ENCODE measurements at regions of chr2 and their contacts with region 1.

Region 1: DNA sequence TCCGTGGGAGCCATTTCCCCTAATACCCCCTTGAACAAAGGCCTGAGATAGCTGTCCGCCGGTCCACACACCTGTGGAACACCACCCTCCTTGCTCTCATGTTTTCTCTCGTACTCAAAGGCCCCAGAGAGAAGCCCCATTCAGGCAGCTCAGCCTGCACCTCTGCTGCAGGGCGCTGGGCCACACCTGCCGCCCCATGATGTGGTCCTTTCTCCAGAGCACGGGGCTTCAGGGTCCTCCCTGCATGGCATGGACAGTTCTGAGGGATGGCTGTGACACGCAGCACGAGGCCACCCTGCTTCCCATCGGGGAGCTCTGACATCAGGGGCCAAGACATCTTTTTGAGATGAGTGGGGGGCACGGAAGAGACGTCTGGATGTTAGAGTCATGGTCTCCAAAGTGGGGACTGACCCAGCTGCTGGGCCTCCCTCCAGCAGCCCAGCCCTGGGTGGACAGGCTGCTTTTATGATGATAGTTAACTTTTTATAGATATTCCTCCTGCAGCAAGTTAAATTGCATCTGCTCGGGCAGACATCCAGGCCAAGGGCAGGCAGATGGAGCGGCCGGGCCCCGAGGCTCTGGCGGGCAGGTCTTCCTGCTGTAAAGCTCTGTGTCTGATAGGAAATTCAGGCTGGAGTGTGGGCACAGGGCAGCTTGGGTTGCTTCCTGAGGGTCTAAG is 56.7 kb downstream of the SDC1 start:
- H3K4me3 ChIP-seq: no peak overlapping the region
- H3K27ac ChIP-seq: no peak overlapping the region
- H3K4me1 ChIP-seq: no peaks in the 10 kb centered on the region
- CTCF ChIP-seq: no peak

Region 2: GRCh38 chr2:19632403-19632991 is 535.7 kb before region 1 on chr2:
- CTCF ChIA-PET with region 1: no interaction called
- POLR2A ChIA-PET with region 1: interaction called, 12 read pairs
- H3K4me3 ChIP-seq: no peak overlapping the region
- H3K27ac ChIP-seq: no peak overlapping the region
- H3K4me1 ChIP-seq: no peaks in the 10 kb centered on the region
- CTCF ChIP-seq: no peak

Region 3: DNA sequence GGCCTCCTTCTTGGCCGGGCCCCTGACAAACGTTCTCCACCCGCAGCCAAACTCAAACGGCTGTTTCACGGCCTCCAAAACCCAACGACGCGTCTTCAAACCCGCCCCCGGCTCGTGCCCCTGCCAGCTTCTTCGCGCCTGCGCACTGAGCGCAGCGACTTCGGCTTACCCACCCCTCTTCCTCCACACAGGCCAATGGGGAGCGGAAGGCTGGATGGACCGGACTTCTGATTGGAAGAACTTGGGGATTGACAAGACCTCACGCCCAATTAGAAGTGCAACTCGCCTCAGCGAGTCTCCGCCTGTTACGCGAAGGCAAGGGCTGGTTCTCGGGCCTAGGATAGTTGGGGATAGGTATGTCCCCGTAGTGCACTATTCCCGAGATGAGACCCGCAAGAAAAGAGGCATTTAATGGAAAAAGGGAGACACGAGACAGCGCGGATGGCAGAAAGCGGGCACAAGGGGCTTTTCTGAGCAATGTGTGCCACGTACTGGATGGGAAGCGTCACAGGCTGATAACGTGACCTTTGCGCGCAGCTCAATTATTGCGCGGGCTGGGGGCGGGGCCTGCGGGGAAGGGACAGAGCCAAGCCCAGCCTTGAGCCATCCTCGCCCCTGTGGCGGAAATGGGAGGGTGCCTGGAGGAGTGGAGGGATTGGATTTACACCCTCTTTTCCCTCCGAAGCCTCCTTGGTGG is 116.5 kb before region 1 on chr2 and contains the start of gene LAPTM4A:
- CTCF ChIA-PET with region 1: no interaction called
- POLR2A ChIA-PET with region 1: no interaction called
- H3K4me3 ChIP-seq: peak within 1 kb of the TSS; percentile 81
- H3K27ac ChIP-seq: peak within 1 kb of the TSS; percentile 83
- H3K4me1 ChIP-seq: peaks cover 7% of the 10 kb centered on the region
- CTCF ChIP-seq: 0 out of 2 replicates have a peak, but pooled peaks have one; percentile 9

Region 4: DNA sequence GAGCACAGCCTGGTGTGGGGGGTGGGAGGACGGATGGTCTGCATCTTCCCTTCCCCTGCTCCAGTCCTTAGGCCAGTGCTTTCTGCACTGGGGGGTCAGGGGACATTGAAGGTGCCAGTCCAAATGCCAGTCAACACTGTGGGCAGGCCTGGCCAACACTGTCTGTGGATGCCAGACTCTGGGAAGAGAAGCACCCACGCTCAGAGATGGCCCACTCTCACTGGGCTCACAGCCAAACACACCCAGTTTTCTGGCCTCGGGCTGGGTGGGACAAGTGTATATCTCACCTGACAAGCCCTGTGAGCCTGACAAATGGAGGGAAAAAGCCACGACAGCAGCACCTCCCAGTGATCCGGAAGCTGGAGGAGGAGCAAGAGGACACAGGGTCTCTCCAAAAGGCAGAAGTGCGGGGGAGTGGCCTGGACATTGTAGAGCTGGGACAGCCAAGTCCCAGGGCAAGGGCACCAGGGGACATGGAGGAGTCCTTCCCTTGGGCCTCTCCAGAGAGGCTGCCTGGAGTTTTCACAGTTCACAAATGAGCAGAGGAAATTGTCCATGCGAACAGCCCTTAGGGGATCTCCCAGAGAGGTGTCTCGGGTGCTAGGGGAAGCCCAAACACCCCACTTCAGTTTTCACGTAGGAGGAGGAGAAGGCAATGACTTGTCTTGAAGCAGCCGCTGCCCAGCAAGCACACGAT is 22.5 kb before region 1 on chr2:
- CTCF ChIA-PET with region 1: no interaction called
- POLR2A ChIA-PET with region 1: no interaction called
- H3K4me3 ChIP-seq: no peak overlapping the region
- H3K27ac ChIP-seq: no peak overlapping the region
- H3K4me1 ChIP-seq: no peaks in the 10 kb centered on the region; the same call in 1 of the 2 replicates
- CTCF ChIP-seq: no peak